Spleen (tissue), 13 donors: ENCODE measurements at regions of chr3 and their contacts with region 1.

Region 1: GRCh38 chr3:48273594-48274211 is 32.8 kb downstream of the ZNF589 start:
- DNase-seq: no peak
- H3K4me3 ChIP-seq: no peak overlapping the region
- H3K27ac ChIP-seq: no peak overlapping the region
- H3K4me1 ChIP-seq: peaks cover 0 to 13% (median 3%) of the 10 kb centered on the region in 6 donors
- H3K27me3 ChIP-seq: no peaks in the 10 kb centered on the region
- CTCF ChIP-seq: peak; percentile 70 to 89 (median 81)
- POLR2A ChIP-seq: no peak

Region 2: DNA sequence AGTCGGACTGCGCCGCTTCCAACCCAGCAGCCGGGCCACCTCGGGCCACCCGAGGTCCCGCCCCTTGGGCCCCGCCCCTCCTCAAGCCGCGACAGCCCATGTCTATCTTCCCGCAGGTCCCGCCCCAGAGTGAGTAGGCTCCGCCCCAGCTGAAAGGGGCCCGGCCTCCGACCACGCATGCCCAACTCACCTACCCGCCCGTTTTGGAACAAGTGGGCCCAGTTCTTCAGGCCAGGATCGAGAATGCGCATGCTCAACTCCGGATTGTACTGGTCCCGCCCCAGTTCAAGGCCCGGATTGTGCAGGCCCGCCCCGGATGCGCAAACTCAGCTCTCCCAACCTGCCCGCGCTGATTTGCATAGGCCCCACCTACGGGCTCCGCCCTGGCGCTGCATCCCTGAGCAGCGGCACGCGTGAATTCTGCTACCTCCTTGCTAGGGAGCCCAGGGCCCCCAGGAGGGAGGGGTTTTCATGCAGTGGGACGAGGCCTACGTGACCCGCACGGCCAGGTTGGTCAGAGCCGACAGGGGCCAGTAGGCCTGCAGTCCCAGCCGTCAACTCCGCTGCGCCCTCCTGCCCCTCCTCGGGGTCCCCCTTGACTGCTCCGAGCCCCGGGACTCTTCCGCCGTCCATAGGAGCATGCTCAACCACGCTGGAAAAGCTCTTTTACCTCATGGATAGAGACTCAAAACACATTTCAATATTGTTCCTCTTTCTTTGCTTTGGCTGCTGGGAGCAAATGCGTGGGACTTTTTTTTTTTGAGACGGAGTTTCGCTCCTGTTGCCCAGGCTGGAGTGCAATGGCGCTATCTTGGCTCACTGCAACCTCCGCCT is 283.3 kb after region 1 on chr3 and contains the start of gene PFKFB4:
- intact Hi-C with region 1: loop called (anchors 10 kb)
- DNase-seq: peak; percentile 99
- H3K4me3 ChIP-seq: peak within 1 kb of the TSS; percentile 41 to 88 (median 56)
- H3K27ac ChIP-seq: peak within 1 kb of the TSS; percentile 31 to 87 (median 77)
- H3K4me1 ChIP-seq: peaks cover 11 to 93% (median 58%) of the 10 kb centered on the region in 6 donors
- H3K27me3 ChIP-seq: no peaks in the 10 kb centered on the region
- CTCF ChIP-seq: peak in 8 of 11 experiments; percentile 14 to 59 (median 38)
- POLR2A ChIP-seq: peak in 1 of 3 donors; percentile 13
- total RNA-seq, gene PFKFB4: 11.0 to 43.1 (median 22.8) TPM